ENCODE measurements at regions of chr11 and their contacts with region 1.

Region 1: GRCh38 chr11:45964911-45965389 is 42.5 kb downstream of the LARGE2 start:
- DNase-seq: peak; percentile 44
- H3K4me3 ChIP-seq: no peak overlapping the region
- H3K27ac ChIP-seq: peak overlapping the region; percentile 36 to 40
- H3K4me1 ChIP-seq: no peaks in the 10 kb centered on the region
- H3K27me3 ChIP-seq: no peaks in the 10 kb centered on the region
- CTCF ChIP-seq: peak; percentile 82 to 93 (median 92)
- POLR2A ChIP-seq: no peak

Region 2: GRCh38 chr11:46006418-46007070 is 41.6 kb after region 1 on chr11:
- intact Hi-C with region 1: loop called (anchors 2 kb)
- DNase-seq: peak; percentile 55
- H3K4me3 ChIP-seq: no peak overlapping the region
- H3K27ac ChIP-seq: no peak overlapping the region
- H3K4me1 ChIP-seq: no peaks in the 10 kb centered on the region
- H3K27me3 ChIP-seq: no peaks in the 10 kb centered on the region
- CTCF ChIP-seq: peak in 3 of 4 experiments; percentile 56 to 83 (median 75)
- POLR2A ChIP-seq: no peak

Region 3: GRCh38 chr11:46315033-46315738 is 350.2 kb after region 1 on chr11:
- intact Hi-C with region 1: loop called (anchors 10 kb)
- DNase-seq: peak; percentile 43
- H3K4me3 ChIP-seq: no peak overlapping the region
- H3K27ac ChIP-seq: no peak overlapping the region
- H3K4me1 ChIP-seq: no peaks in the 10 kb centered on the region
- H3K27me3 ChIP-seq: no peaks in the 10 kb centered on the region
- CTCF ChIP-seq: peak; percentile 77 to 86 (median 80)
- POLR2A ChIP-seq: no peak

Measured in prostate gland (tissue), 2 donors.